ENCODE measurements at regions of chr6 and their contacts with region 1.

Region 1: DNA sequence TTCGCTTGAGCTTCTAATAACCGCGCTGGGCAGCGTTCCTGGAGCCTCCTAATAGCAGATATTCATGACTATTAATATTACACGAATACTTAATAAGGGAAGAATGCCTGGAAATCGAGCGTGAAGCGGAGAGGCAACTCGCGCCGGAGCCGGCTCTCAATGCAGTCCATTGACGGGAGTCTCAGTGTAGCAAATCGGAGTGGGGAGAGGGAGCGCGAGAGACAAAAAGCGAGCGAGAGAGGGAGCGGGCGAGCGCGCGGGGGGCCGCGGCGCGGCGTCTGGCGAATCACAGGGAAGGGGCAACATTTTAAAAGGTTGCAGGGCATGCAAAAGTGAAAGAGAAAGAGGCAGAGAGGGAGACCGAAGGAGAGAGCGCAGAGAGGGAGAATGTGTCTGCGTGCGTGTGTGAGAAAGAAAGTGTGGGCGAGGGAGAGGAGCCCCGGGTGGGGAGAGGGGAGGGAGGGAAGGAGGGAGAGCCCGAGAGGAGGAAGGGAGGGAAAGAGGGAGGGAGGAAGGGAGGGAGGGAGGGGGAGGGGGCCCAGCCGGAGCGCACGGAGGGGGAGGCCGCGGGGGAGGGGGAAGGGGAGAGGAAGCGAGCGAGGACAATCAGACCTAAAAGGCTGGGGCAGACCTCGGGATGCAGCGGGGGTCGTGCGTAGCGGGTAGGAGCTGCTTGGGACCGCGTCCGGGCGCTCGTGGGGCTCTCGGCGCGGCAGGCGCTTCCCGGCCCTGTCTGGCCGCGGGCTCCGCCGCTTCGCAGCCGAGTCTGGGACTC is 2.7 kb downstream of the TFAP2A start:
- DNase-seq: peak; percentile 59 to 79
- H3K4me3 ChIP-seq: peak overlapping the region; percentile 88
- H3K27ac ChIP-seq: peak overlapping the region; percentile 89
- H3K4me1 ChIP-seq: peaks cover 28% of the 10 kb centered on the region
- H3K27me3 ChIP-seq: no peaks in the 10 kb centered on the region
- CTCF ChIP-seq: no peak

Region 2: GRCh38 chr6:8707956-8708772 is 1704.0 kb before region 1 on chr6:
- CTCF ChIA-PET with region 1: interaction called, 13 read pairs
- POLR2A ChIA-PET with region 1: no interaction called
- intact Hi-C with region 1: no loop called
- DNase-seq: peak in 1 of 2 experiments; percentile 56
- H3K4me3 ChIP-seq: no peak overlapping the region
- H3K27ac ChIP-seq: no peak overlapping the region
- H3K4me1 ChIP-seq: no peaks in the 10 kb centered on the region
- H3K27me3 ChIP-seq: no peaks in the 10 kb centered on the region
- CTCF ChIP-seq: no peak; the same call in 1 of the 2 replicates

Region 3: DNA sequence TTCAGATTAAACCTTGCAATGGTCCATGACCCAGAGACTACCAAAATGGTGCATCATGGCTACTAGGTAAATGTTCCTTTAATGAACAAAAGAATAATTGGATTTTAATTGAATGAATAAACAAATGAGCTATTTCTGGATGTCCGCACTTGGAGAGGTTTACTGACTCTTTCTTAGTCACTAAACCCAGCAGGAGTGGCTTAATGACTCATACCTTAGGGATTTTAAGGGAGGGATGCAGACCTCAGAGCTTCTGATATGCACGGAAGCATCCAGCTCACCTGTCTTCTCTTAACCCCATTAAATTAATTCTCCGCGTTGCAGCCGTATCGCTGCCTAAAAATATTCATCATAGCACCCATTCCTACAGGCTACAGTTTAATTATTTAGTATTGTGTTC is 1006.8 kb before region 1 on chr6:
- CTCF ChIA-PET with region 1: no interaction called
- POLR2A ChIA-PET with region 1: no interaction called
- intact Hi-C with region 1: loop called (anchors 10 kb)
- DNase-seq: peak; percentile 45 to 79
- H3K4me3 ChIP-seq: peak overlapping the region; percentile 31; the same call in 1 of the 2 replicates
- H3K27ac ChIP-seq: 0 out of 2 replicates have a peak overlapping the region, but pooled peaks have one; percentile 12
- H3K4me1 ChIP-seq: peaks cover 16% of the 10 kb centered on the region
- H3K27me3 ChIP-seq: no peaks in the 10 kb centered on the region
- CTCF ChIP-seq: no peak

Region 4: DNA sequence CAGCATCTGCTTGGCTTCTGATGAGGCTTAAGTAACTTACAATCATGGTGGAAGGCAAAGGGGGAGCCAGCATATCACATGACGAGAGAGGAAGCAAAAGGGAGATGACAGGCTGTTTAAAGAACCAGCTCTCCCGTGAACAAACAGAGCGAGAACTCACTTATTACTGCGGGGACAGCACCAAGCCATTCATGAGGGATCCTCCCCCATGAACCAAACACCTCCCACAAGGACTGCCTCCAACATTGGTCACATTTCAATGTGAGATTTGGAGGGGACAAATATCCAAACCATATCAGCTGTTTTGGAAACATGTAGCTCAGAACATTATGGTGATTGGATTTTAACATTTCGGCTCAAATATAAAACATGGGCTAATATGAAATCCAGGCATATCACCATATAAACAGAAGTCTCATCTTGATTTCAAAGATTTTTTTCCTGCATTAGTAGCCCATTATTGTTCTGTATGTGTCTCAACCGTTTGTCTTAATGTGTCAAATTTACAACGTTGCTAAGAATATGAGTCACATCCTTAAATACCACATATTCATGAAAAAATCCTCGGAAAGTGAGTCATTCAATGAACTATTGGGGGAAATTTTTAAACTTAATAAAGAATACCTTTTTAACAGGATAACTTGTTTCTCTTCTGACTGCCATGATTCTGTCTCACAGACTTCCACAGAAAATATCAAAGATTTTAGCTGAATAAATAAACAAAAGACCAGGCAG is 891.6 kb before region 1 on chr6:
- CTCF ChIA-PET with region 1: no interaction called
- POLR2A ChIA-PET with region 1: interaction called, 5 read pairs
- intact Hi-C with region 1: loop called (anchors 5 kb)
- DNase-seq: peak in 1 of 2 experiments; percentile 70
- H3K4me3 ChIP-seq: no peak overlapping the region
- H3K27ac ChIP-seq: 0 out of 2 replicates have a peak overlapping the region, but pooled peaks have one; percentile 12
- H3K4me1 ChIP-seq: peaks cover 39% of the 10 kb centered on the region
- H3K27me3 ChIP-seq: no peaks in the 10 kb centered on the region
- CTCF ChIP-seq: no peak

Region 5: DNA sequence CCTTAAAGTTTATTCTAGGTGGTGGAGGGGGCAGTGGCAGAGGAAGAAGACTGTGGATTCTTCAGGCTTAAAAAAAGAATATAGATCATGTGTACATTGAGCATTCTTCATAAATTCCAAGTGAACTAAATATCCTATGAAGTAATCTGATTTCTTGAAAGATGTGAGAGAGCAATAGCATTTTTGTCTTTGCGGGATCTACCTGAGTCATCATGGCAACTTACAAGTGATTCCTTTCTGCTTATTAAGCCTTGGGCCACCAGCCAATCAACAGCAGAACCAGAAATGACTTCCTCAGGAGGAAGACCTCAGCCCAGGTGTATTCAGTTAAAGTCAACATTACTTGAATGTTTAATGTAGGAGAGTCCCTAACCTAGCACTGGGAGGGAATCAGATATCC is 754.2 kb before region 1 on chr6:
- CTCF ChIA-PET with region 1: no interaction called
- POLR2A ChIA-PET with region 1: no interaction called
- intact Hi-C with region 1: loop called (anchors 5 kb)
- DNase-seq: peak; percentile 53 to 54
- H3K4me3 ChIP-seq: no peak overlapping the region
- H3K27ac ChIP-seq: no peak overlapping the region
- H3K4me1 ChIP-seq: no peaks in the 10 kb centered on the region
- H3K27me3 ChIP-seq: no peaks in the 10 kb centered on the region
- CTCF ChIP-seq: no peak

Region 6: DNA sequence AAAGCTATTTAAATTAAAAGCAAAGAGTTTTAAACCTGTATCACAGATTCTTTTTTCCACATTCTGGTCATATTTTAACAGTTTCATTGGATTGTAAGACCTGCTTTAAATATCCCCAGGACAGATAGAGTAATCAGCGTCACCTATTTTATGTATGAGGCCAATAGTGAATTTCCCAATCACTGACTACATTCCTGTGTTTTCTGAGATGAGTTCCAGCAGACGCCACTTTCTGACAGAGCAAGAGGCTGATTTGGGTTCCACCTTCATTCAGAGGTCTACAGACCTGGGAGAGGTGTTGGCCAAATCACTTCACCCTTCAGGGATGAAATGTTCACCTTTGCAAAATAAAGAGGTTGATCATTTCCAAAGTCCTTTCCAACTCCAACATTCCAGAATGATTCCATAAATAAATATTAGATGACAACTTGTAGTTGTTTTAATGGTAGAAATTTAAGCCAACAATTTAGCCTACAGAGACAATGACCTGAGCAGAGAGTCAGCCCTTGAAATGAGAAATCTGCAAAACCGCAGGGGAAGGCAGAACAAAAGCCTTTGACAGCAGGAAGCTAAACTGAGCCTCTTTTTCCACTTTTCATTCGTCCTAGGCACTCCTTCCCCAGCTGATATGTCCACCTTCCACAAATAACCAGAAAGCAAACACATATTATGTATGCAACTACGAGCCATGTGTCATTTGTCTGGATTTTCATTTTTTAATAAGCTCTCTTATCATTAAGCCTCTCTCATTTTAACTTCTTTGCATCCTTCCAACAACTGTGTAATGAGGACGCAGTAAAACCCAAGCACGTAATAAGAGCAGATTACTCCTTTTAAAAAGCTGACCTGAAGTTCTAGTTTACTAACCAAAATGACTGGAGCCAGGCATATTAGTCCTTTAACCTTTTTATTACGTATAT is 102.4 kb before region 1 on chr6:
- CTCF ChIA-PET with region 1: no interaction called
- POLR2A ChIA-PET with region 1: no interaction called
- intact Hi-C with region 1: no loop called
- DNase-seq: no peak
- H3K4me3 ChIP-seq: no peak overlapping the region
- H3K27ac ChIP-seq: no peak overlapping the region; the same call in 1 of the 2 replicates
- H3K4me1 ChIP-seq: peaks cover 29% of the 10 kb centered on the region
- H3K27me3 ChIP-seq: no peaks in the 10 kb centered on the region
- CTCF ChIP-seq: no peak

Region 7: DNA sequence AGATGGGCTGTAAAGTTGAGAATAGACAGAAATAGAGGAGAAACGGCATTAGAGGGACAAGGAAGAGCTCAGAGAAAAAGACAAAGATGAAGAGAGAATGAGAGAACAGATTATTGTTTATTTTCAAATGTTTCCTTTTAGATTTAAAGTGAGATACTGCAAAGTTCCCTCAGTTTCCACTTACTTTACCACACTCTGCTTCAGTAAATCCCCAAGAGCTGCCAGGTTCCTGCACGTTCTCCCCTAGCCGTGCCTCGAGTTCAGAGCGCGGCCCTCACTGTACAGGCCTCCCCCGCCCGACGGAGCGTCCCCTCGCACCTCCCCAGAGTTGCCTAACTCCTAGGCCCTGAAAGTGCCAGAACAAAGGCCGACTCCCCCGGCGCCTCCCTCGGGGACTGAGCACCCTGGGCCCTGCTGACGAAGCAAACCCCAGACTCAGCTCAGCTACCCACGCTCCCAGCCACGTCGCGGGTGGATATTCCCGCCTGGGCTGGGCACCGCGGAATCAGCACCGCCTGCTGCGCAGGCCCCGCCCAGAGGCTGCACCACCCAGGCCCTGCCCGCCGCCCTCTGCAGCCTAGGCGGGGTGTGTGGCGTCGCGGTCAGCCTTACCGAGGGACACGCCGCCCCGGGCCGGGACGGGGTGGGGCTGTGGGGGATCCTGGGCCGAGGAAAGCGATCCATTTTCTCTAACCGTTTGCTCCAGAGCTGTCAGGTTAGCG is 28.9 kb before region 1 on chr6:
- CTCF ChIA-PET with region 1: no interaction called
- POLR2A ChIA-PET with region 1: no interaction called
- intact Hi-C with region 1: no loop called
- DNase-seq: peak in 1 of 2 experiments; percentile 69
- H3K4me3 ChIP-seq: peak overlapping the region; percentile 62
- H3K27ac ChIP-seq: no peak overlapping the region
- H3K4me1 ChIP-seq: 0 out of 2 replicates have a peak, but pooled peaks cover 5% of the 10 kb centered on the region
- H3K27me3 ChIP-seq: no peaks in the 10 kb centered on the region
- CTCF ChIP-seq: no peak

Region 8: GRCh38 chr6:10393544-10394225 is 18.5 kb before region 1 on chr6:
- CTCF ChIA-PET with region 1: no interaction called
- POLR2A ChIA-PET with region 1: no interaction called
- intact Hi-C with region 1: no loop called
- DNase-seq: no peak
- H3K4me3 ChIP-seq: no peak overlapping the region
- H3K27ac ChIP-seq: no peak overlapping the region
- H3K4me1 ChIP-seq: no peaks in the 10 kb centered on the region
- H3K27me3 ChIP-seq: no peaks in the 10 kb centered on the region
- CTCF ChIP-seq: no peak

Region 9: DNA sequence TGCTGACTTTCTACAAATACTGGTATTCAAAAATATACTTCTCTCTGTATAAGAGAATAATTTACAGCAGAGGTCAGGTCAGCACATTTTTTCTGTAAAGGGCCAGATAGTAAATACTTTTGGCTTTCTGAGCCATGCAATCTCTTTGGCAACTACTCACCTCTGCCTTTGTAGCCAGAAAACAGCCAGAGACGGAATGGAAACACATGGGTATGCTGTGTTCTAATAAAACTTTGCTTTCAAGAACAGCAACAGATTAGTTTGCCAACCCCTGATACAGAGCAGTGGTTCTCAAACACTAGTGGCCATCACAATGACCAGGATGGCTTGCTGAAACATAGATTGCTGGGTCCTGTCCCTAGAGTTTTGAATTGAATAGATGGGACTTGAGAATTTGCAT is 521.0 kb after region 1 on chr6:
- CTCF ChIA-PET with region 1: no interaction called
- POLR2A ChIA-PET with region 1: no interaction called
- intact Hi-C with region 1: no loop called
- DNase-seq: no peak
- H3K4me3 ChIP-seq: no peak overlapping the region
- H3K27ac ChIP-seq: no peak overlapping the region
- H3K4me1 ChIP-seq: no peaks in the 10 kb centered on the region
- H3K27me3 ChIP-seq: no peaks in the 10 kb centered on the region
- CTCF ChIP-seq: no peak